ENCODE measurements at regions of chr10 and their contacts with region 1.

Region 1: DNA sequence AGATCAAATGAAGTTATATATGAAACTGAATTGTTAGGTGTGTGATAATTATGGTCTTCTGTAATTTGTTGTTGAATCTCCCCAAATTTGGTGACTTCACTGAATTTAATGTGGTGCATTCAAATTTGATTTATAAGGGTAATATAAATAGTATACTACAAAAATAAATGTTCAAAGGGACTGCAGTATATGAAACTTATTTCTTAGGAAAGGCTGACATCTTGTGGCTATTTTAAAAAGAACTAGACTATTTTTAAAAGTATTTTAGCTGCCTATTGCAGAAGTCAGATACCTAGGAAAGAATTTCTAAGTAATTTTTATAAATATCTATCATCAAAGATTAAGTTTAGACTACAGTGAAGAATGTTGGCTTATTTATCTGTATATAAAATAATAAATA is 36.6 kb downstream of the ATRNL1 start:
- DNase-seq: no peak
- ATAC-seq: no peak

Region 2: GRCh38 chr10:114876602-114877300 is 253.0 kb before region 1 on chr10:
- intact Hi-C with region 1: loop called (anchors 2 kb)
- DNase-seq: peak; percentile 72
- ATAC-seq: peak; percentile 88

Region 3: GRCh38 chr10:115030483-115031198 is 99.1 kb before region 1 on chr10:
- intact Hi-C with region 1: no loop called
- DNase-seq: no peak
- ATAC-seq: no peak